ENCODE measurements at regions of chr20 and their contacts with region 1.

Region 1: DNA sequence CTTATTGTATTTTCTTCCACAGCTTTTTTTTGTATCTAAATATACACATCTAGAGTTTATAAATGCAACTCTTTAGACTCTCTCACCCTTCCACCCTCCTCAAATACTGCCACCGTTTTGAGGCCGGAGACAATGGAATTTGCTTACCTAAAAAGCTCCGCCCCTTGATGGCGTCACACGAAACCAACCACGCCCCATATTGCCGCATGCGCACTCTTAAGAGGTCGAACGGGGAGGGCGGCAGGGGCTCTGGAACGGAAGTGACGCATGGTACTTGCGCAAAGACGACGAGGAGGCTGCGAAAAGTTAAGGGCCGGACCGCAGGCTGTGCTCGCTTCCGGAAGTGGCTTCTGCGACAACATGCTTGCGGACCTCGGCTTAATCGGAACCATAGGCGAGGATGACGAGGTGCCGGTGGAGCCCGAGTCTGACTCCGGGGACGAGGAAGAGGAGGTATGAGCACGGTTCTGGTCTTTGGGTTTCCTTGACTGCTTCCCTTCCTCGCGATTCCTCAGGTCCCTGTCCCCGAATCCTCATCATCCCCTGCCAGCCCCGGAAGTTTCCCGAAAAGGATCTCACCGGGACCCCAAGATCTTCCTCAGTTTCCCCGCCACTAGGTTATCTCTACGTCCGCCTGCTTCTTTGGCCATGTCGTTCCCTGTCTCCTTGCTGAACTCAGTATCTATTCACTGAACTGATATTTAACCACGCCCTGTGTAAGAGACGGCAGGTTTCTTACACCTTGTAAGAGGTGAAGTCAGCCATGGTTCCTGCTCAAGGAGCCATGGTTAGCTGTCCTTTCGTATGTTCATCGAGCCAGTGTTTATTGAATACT is at the start of gene DDX27:
- DNase-seq: peak; percentile 97
- ATAC-seq: peak; percentile 88
- H3K4me3 Mint-ChIP-seq: peak within 1 kb of the TSS; percentile 96
- H3K27ac Mint-ChIP-seq: peak within 1 kb of the TSS; percentile 98
- H3K4me1 Mint-ChIP-seq: peaks cover 19% of the 10 kb centered on the region
- H3K27me3 Mint-ChIP-seq: peaks cover 2% of the 10 kb centered on the region; the same call in 1 of the 2 replicates
- CTCF ChIP-seq: no peak
- total RNA-seq, gene DDX27: 44.2 to 54.8 TPM (median 46.5 TPM) in 3 replicates

Region 2: DNA sequence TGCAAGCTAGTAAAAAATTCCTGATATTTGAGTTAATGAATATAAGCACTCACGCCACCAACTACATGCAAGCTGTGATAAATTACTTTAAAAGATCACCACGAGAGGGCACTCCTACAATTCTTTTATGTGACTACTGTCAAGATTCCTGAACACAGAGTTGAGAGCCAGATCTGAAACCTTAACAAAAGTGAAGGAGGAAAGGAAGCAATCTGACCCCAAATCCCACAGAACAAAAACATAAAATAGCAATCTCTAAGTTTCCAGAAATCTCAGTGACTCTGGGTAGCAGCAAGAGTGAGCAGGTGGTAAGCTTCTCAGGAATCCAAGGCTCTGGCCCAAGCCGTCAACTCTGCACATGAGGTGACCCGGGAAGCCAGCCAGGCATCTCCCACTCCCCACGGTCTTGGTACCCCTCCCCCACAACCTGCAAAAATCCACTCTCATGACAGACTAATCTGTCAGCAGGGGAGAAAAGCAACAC is 86.3 kb before region 1 on chr20:
- CTCF ChIA-PET with region 1: interaction called, 50 read pairs
- POLR2A ChIA-PET with region 1: interaction called, 3 read pairs
- DNase-seq: no peak
- ATAC-seq: peak; percentile 59
- H3K4me3 Mint-ChIP-seq: no peak overlapping the region
- H3K27ac Mint-ChIP-seq: peak overlapping the region; percentile 67; the same call in 1 of the 2 replicates
- H3K4me1 Mint-ChIP-seq: peaks cover 5% of the 10 kb centered on the region
- H3K27me3 Mint-ChIP-seq: no peaks in the 10 kb centered on the region
- CTCF ChIP-seq: 0 out of 2 replicates have a peak, but pooled peaks have one; percentile 33

Region 3: DNA sequence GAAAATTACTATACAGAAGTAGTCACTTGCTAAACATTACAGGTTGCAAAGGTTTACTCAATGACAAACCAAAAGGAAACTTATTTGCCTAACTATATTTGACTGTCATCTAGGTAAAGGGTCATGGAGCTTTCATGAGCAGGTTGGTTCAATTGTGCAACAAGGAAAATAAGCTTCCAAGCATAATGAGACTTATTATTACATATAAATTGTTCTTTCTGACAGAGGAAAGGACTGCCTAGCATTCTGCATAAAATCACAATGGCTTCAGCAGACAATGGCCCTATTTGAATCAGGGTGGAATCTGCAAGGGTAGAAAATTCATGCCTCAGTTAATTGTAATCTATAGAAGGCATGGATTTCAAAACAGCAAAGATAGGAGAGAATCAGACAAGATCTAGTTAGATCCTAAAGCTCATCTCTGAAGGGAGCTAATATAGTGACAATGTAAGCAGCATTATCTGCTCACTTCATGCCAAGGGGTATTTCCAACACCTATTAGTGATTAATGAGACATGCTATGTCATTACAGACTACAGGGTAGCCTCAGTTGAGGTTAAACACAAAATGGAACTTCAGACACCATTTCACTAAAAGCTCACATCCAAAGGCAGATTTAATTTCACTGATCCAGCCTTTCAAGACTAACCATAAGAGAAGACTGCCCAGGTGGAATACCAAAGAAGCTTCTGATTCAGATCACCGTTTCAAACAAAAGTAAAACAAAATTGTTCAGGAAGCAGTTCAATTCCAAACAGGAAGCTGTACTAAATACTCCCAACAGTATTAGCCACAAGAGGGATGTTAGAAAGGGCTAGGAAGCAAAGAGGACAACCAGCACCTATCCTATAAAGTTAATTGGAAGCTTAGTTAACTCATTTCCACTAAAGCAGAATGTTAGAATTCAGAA is 39.7 kb before region 1 on chr20:
- CTCF ChIA-PET with region 1: interaction called, 17 read pairs
- POLR2A ChIA-PET with region 1: no interaction called
- DNase-seq: no peak
- ATAC-seq: no peak
- H3K4me3 Mint-ChIP-seq: no peak overlapping the region
- H3K27ac Mint-ChIP-seq: peak overlapping the region; percentile 82
- H3K4me1 Mint-ChIP-seq: peaks cover 37% of the 10 kb centered on the region
- H3K27me3 Mint-ChIP-seq: no peaks in the 10 kb centered on the region
- CTCF ChIP-seq: no peak

Region 4: DNA sequence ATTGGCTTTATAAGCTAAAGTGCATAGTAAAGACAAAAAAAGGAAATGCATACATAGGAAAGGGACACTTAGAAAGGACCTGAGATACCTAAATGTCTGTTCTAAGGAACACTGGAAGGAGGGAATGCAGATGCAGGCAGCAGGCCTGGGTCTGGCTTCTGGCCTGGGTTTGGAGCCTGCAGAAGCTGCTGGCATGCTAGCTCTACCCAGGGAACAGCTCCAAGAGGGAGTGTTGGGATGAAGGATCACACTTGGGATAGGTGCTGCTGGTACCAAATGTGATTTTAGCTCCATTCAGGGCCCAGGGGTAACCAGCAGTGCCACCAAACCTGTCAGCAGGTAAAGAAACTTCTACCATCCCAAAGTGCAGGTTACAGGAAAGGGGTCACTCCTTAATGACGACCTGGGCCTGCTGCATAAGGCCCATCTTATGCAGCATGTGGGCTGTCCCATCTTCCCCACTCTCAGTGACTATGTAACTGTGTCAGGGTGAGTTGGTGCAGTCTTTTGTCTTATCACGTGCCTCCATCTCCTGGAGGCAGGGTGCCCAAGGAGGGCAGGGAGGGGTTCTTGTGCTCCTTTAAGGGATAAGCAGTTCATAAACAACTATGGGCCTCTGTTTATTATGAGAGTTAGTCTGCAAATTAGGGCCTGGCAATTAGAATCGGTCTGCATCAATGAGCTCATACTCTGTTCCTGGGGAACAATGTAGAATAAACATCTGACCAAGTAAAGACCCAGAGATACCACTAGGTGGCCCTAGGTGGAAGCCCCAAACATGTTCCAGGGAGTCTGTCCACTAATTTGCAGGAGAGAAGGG is 26.8 kb after region 1 on chr20:
- CTCF ChIA-PET with region 1: interaction called, 11 read pairs
- POLR2A ChIA-PET with region 1: no interaction called
- DNase-seq: no peak
- ATAC-seq: peak; percentile 93
- H3K4me3 Mint-ChIP-seq: no peak overlapping the region
- H3K27ac Mint-ChIP-seq: peak overlapping the region; percentile 87
- H3K4me1 Mint-ChIP-seq: no peaks in the 10 kb centered on the region
- H3K27me3 Mint-ChIP-seq: no peaks in the 10 kb centered on the region
- CTCF ChIP-seq: peak; percentile 76

Region 5: GRCh38 chr20:49287555-49288249 is 68.4 kb after region 1 on chr20:
- CTCF ChIA-PET with region 1: no interaction called
- POLR2A ChIA-PET with region 1: no interaction called
- DNase-seq: no peak
- ATAC-seq: no peak
- H3K4me3 Mint-ChIP-seq: peak overlapping the region; percentile 100
- H3K27ac Mint-ChIP-seq: peak overlapping the region; percentile 88
- H3K4me1 Mint-ChIP-seq: peaks cover 73% of the 10 kb centered on the region
- H3K27me3 Mint-ChIP-seq: no peaks in the 10 kb centered on the region
- CTCF ChIP-seq: no peak

Region 6: GRCh38 chr20:49534255-49534712 is 315.0 kb after region 1 on chr20:
- CTCF ChIA-PET with region 1: no interaction called
- POLR2A ChIA-PET with region 1: no interaction called
- DNase-seq: peak; percentile 76
- ATAC-seq: peak; percentile 90
- H3K4me3 Mint-ChIP-seq: no peak overlapping the region
- H3K27ac Mint-ChIP-seq: no peak overlapping the region
- H3K4me1 Mint-ChIP-seq: no peaks in the 10 kb centered on the region
- H3K27me3 Mint-ChIP-seq: no peaks in the 10 kb centered on the region
- CTCF ChIP-seq: peak; percentile 81

Measured in WTC11 (cell line).